Gastrocnemius medialis (tissue), 4 donors: ENCODE measurements at regions of chr12 and their contacts with region 1.

Region 1: GRCh38 chr12:130335517-130336392 is 1.9 kb upstream of the PIWIL1 start:
- DNase-seq: no peak
- ATAC-seq: no peak
- H3K4me3 ChIP-seq: no peak overlapping the region
- H3K27ac ChIP-seq: no peak overlapping the region
- H3K4me1 ChIP-seq: no peaks in the 10 kb centered on the region
- H3K27me3 ChIP-seq: peaks cover 8 to 15% (median 9%) of the 10 kb centered on the region in 3 donors
- CTCF ChIP-seq: peak; percentile 46 to 53 (median 52)
- POLR2A ChIP-seq: no peak

Region 2: GRCh38 chr12:130031571-130032189 is 304.1 kb before region 1 on chr12:
- in situ Hi-C with region 1: loop called in 2 of 4 experiments (anchors 5 to 10 kb)
- intact Hi-C with region 1: no loop called
- DNase-seq: no peak
- ATAC-seq: no peak
- H3K4me3 ChIP-seq: no peak overlapping the region
- H3K27ac ChIP-seq: no peak overlapping the region
- H3K4me1 ChIP-seq: no peaks in the 10 kb centered on the region
- H3K27me3 ChIP-seq: peaks cover 0 to 8% (median 0%) of the 10 kb centered on the region in 3 donors
- CTCF ChIP-seq: peak in 3 of 5 experiments; percentile 33 to 62 (median 49)
- POLR2A ChIP-seq: no peak

Region 3: GRCh38 chr12:130041983-130042812 is 293.6 kb before region 1 on chr12:
- in situ Hi-C with region 1: loop called in 3 of 4 experiments (anchors 5 to 10 kb)
- intact Hi-C with region 1: loop called (anchors 2 kb)
- DNase-seq: no peak
- ATAC-seq: no peak
- H3K4me3 ChIP-seq: no peak overlapping the region
- H3K27ac ChIP-seq: no peak overlapping the region
- H3K4me1 ChIP-seq: no peaks in the 10 kb centered on the region
- H3K27me3 ChIP-seq: peaks cover 3 to 23% (median 15%) of the 10 kb centered on the region in 3 donors
- CTCF ChIP-seq: peak in 4 of 5 experiments; percentile 40 to 64 (median 56)
- POLR2A ChIP-seq: no peak

Region 4: DNA sequence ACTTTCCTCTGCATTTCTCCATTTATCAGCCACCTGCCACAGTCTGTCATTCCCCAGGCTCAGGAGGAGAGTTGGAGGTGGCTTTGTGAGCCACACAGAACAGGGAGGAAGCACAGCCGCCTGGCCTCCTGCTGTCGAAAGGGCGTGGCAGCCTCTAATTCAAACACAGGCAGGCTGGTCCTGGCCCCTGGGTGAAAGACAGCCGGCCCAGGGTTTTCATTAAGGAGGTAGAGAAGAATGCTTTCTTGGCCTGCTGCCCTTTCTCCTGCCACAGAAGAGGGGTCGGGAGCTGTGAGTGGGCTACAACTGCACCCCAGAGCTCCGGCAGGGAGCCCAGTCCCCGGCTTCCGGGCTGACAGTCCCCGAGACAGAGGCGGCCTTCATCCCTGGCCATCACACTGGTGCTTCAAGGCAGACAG is 282.1 kb before region 1 on chr12:
- in situ Hi-C with region 1: loop called in 2 of 4 experiments (anchors 5 to 10 kb)
- intact Hi-C with region 1: no loop called
- DNase-seq: no peak
- ATAC-seq: no peak
- H3K4me3 ChIP-seq: no peak overlapping the region
- H3K27ac ChIP-seq: no peak overlapping the region
- H3K4me1 ChIP-seq: no peaks in the 10 kb centered on the region
- H3K27me3 ChIP-seq: peaks cover 0 to 3% (median 0%) of the 10 kb centered on the region in 3 donors
- CTCF ChIP-seq: no peak
- POLR2A ChIP-seq: no peak

Region 5: GRCh38 chr12:130440411-130441080 is 104.8 kb after region 1 on chr12:
- in situ Hi-C with region 1: no loop called
- intact Hi-C with region 1: no loop called
- DNase-seq: no peak
- ATAC-seq: no peak
- H3K4me3 ChIP-seq: no peak overlapping the region
- H3K27ac ChIP-seq: no peak overlapping the region
- H3K4me1 ChIP-seq: no peaks in the 10 kb centered on the region
- H3K27me3 ChIP-seq: no peaks in the 10 kb centered on the region
- CTCF ChIP-seq: no peak
- POLR2A ChIP-seq: no peak